ENCODE measurements at regions of chr16 and their contacts with region 1.

Region 1: DNA sequence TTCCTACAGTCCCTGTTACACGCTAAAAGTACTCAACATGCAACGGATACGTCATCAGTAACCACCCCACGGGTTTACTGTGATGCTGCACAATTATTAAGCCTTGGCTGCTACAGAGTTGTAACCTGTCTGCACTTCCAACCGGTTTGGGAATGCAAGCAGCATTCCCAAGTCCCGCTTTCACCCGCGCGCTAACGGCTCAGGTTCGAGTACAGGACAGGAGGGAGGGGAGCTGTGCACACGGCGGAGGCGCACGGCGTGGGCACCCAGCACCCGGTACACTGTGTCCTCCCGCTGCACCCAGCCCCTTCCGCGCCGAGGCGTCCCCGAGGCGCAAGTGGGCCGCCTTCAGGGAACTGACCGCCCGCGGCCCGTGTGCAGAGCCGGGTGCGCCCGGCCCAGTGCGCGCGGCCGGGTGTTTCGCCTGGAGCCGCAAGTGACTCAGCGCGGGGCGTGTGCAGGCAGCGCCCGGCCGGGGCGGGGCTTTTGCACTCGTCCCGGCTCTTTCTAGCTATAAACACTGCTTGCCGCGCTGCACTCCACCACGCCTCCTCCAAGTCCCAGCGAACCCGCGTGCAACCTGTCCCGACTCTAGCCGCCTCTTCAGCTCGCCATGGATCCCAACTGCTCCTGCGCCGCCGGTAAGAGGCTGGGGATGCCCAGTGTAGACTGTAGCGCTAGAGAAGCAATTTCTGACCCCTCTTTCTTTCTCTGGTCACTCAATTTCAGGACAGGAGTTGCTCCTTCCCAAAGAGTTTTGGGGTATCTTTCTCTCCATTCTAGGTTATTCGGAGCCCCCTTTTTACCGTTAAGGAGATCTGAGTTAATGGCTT is at the start of gene MT2A:
- DNase-seq: peak; percentile 74 to 89 (median 80)
- ATAC-seq: peak; percentile 72 to 89
- H3K4me3 Mint-ChIP-seq: peak within 1 kb of the TSS; percentile 86 to 100 (median 96)
- H3K27ac Mint-ChIP-seq: peak within 1 kb of the TSS; percentile 91 to 99 (median 96)
- H3K4me1 Mint-ChIP-seq: peaks cover 30 to 59% (median 54%) of the 10 kb centered on the region in 4 donors
- H3K27me3 Mint-ChIP-seq: no peaks in the 10 kb centered on the region
- polyA plus RNA-seq, gene MT2A: 248 to 303 (median 294) TPM

Region 2: GRCh38 chr16:56625140-56625942 is 17.1 kb after region 1 on chr16 and contains the start of gene MT1E:
- POLR2A ChIA-PET with region 1: interaction called, 50 read pairs
- DNase-seq: peak in 7 of 10 donors; percentile 16 to 50 (median 38)
- ATAC-seq: peak; percentile 90 to 93
- H3K4me3 Mint-ChIP-seq: peak within 1 kb of the TSS; percentile 85 to 95 (median 90)
- H3K27ac Mint-ChIP-seq: peak within 1 kb of the TSS; percentile 65 to 93 (median 84)
- H3K4me1 Mint-ChIP-seq: peaks cover 10 to 21% (median 17%) of the 10 kb centered on the region in 4 donors
- H3K27me3 Mint-ChIP-seq: peaks cover 0 to 14% (median 5%) of the 10 kb centered on the region in 5 donors
- polyA plus RNA-seq, gene MT1E: 7.1 to 21.9 (median 10.5) TPM

Region 3: DNA sequence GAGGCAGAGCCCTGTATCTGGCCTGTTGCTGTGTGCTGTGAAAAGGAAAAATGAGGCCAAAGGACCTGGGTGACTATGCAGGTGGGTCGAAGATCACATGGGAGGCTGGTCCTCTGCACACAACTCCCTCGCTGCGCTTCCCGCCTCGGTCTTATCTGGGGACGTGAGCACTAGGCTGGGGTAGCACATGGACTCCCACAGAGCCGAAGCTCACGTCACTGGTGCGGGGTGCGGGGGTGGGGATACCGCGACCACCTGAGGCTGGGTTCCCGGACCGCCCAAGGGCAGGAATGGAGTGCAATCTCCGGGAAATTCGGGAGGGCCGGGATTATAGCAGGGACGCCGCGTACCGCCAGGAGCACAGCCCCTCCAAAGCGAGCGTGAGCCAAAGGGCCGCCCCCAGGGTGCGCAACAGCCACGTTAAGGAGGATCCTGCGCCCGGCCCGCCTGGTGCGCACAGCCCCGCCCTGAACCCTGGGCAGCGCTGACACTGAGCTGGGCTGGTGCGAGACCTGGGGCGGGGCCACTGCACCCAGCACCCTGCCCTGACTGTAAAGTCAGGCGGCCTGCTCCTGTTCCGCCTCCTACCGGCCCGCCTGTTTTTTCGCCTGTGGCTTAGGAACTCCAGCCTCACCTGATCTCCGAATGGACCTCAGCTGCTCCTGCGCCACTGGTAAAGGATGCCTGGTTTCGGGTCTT is 35.0 kb after region 1 on chr16:
- POLR2A ChIA-PET with region 1: interaction called, 23 read pairs
- DNase-seq: peak; percentile 53 to 85 (median 64)
- ATAC-seq: peak; percentile 98 to 100
- H3K4me3 Mint-ChIP-seq: peak overlapping the region; percentile 72 to 86 (median 80)
- H3K27ac Mint-ChIP-seq: peak overlapping the region in 9 of 10 donors; percentile 37 to 80 (median 72)
- H3K4me1 Mint-ChIP-seq: peaks cover 16 to 31% (median 19%) of the 10 kb centered on the region in 4 donors
- H3K27me3 Mint-ChIP-seq: peaks cover 19 to 39% (median 28%) of the 10 kb centered on the region in 5 donors

Region 4: DNA sequence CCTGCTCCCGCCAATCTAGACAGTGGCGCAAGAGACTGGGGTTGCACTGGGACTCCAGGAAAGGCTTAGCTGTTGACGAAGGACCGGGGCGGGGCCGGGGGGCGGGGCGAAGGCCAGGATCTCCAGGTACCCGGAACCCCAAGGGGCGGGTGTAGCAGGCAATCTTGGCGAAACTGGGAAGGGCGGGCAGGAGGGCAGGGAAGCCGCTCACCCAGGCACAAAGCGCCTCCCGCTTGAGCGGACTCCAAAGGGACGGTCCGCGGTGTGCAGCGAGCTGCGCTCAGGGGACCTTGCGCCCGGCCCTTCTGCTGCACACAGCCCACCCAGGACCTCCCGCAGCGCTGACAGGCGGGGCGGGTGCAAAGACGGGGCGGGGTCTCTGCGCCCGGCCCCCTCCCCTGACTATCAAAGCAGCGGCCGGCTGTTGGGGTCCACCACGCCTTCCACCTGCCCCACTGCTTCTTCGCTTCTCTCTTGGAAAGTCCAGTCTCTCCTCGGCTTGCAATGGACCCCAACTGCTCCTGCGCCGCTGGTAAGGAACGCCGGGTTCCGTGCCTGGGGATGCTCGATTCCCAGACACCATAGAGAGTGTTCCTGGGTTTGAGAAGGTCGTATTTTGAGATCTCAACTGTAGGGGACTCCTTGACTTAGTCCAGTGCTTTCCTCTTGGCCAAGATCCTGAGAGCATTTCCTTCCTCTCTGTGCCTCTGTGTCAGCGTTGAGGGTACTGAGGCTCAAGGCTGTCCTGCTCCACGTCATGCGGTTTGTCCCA is 49.5 kb after region 1 on chr16 and contains the start of gene MT1F:
- POLR2A ChIA-PET with region 1: interaction called, 33 read pairs
- DNase-seq: peak; percentile 43 to 80 (median 68)
- ATAC-seq: peak; percentile 80 to 83
- H3K4me3 Mint-ChIP-seq: peak within 1 kb of the TSS; percentile 92 to 99 (median 97)
- H3K27ac Mint-ChIP-seq: peak within 1 kb of the TSS; percentile 87 to 98 (median 97)
- H3K4me1 Mint-ChIP-seq: peaks cover 23 to 46% (median 38%) of the 10 kb centered on the region in 4 donors
- H3K27me3 Mint-ChIP-seq: peaks cover 0 to 8% (median 2%) of the 10 kb centered on the region in 5 donors
- polyA plus RNA-seq, gene MT1F: 82.3 to 97.4 (median 94.2) TPM

Region 5: GRCh38 chr16:56681939-56682702 is 73.9 kb after region 1 on chr16 and contains the start of gene MT1X:
- POLR2A ChIA-PET with region 1: interaction called, 21 read pairs
- DNase-seq: peak; percentile 77 to 94 (median 86)
- ATAC-seq: peak; percentile 98 to 99
- H3K4me3 Mint-ChIP-seq: peak within 1 kb of the TSS; percentile 94 to 99 (median 96)
- H3K27ac Mint-ChIP-seq: peak within 1 kb of the TSS; percentile 94 to 99 (median 98)
- H3K4me1 Mint-ChIP-seq: peaks cover 17 to 36% (median 28%) of the 10 kb centered on the region in 4 donors
- H3K27me3 Mint-ChIP-seq: no peaks in the 10 kb centered on the region
- polyA plus RNA-seq, gene MT1X: 185 to 201 (median 201) TPM

Region 6: GRCh38 chr16:56700195-56700594 is 91.9 kb after region 1 on chr16:
- POLR2A ChIA-PET with region 1: interaction called, 21 read pairs
- DNase-seq: no peak
- ATAC-seq: no peak
- H3K4me3 Mint-ChIP-seq: no peak overlapping the region
- H3K27ac Mint-ChIP-seq: peak overlapping the region in 3 of 10 donors; percentile 6 to 30 (median 29)
- H3K4me1 Mint-ChIP-seq: peaks cover 0 to 15% (median 12%) of the 10 kb centered on the region in 4 donors
- H3K27me3 Mint-ChIP-seq: no peaks in the 10 kb centered on the region

Region 7: DNA sequence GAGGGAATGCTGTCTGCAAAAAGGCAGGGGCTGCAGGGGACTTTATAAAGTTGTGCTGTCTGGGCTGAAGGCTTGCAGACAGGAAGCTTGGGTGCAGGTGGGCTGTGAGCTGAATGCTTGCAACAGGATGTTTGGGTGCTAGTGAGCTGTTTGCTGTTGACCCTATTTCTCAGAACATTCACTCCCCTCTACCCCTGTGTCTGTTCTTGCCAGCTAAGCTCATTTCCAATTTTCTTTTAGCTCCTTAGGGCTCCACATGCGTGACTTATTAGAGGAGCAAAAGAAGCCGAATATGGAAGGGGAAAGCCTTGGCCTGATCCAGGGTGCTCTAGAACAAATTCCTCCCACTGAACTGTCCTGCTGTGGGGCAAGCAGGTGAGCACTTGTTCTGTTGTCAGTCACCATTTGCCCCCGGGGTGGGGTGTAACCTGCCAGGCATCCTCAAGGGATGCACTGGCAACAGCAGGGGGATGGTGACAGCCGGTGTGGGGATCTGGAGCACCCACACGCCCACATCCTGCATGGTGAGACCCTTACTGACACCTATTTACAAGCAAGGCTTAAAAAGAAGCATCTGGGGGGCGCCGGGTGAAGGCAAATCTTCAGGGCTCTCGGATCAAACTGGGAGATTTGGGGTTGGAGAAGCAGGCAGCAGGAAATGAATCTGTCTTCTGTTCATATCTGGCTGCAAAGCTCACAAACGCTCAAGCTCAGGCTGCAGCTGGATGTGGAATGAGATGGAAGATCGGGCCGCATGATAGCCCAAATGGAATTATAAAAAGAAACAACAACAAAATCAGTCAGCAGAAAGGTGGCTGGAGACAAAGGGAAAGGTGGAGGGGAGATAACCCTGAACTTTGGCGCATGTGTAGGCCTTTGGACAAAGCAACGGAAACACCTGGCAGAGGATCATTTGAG is 100.5 kb after region 1 on chr16:
- POLR2A ChIA-PET with region 1: interaction called, 21 read pairs
- DNase-seq: peak; percentile 14 to 73 (median 51)
- ATAC-seq: peak; percentile 91 to 92
- H3K4me3 Mint-ChIP-seq: peak overlapping the region; percentile 88 to 97 (median 93)
- H3K27ac Mint-ChIP-seq: peak overlapping the region; percentile 92 to 99 (median 96)
- H3K4me1 Mint-ChIP-seq: peaks cover 28 to 67% (median 48%) of the 10 kb centered on the region in 4 donors
- H3K27me3 Mint-ChIP-seq: no peaks in the 10 kb centered on the region